Mammary epithelial cell (primary cell): ENCODE measurements at regions of chrX and their contacts with region 1.

Region 1: GRCh38 chrX:17547658-17548057 is 172.7 kb downstream of the NHS start:
- DNase-seq: peak; percentile 99
- H3K4me3 ChIP-seq: no peak overlapping the region
- H3K27ac ChIP-seq: peak overlapping the region; percentile 63
- H3K4me1 ChIP-seq: peaks cover 50% of the 10 kb centered on the region
- H3K27me3 ChIP-seq: no peaks in the 10 kb centered on the region
- CTCF ChIP-seq: no peak

Region 2: GRCh38 chrX:17405225-17405969 is 142.3 kb before region 1 on chrX:
- CTCF ChIA-PET with region 1: no interaction called
- dilution Hi-C with region 1: no loop called
- in situ Hi-C with region 1: no loop called
- intact Hi-C with region 1: loop called (anchors 2 kb)
- DNase-seq: peak; percentile 96
- H3K4me3 ChIP-seq: no peak overlapping the region
- H3K27ac ChIP-seq: peak overlapping the region; percentile 92
- H3K4me1 ChIP-seq: peaks cover 40% of the 10 kb centered on the region
- H3K27me3 ChIP-seq: no peaks in the 10 kb centered on the region
- CTCF ChIP-seq: no peak

Region 3: DNA sequence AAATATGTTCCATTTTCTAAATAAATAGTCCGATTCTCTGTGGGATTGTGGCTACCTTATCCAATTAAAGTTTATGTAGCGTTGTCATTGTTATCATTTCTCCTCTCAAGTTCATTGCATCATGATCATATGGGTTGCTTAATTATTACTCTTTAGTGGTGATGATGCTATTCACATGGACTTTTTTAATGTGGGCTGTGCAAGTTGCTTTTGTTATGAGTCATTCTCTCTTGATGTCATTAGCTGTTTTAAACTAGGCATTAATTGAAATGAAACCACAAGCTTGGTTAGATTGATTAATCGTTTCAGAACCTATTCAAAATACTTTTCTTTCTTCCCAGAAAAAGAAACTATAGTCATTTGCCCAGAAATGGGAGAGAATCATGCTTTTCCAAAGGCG is 134.4 kb before region 1 on chrX:
- CTCF ChIA-PET with region 1: no interaction called
- dilution Hi-C with region 1: no loop called
- in situ Hi-C with region 1: no loop called
- intact Hi-C with region 1: loop called (anchors 1 kb)
- DNase-seq: peak; percentile 91
- H3K4me3 ChIP-seq: no peak overlapping the region
- H3K27ac ChIP-seq: peak overlapping the region; percentile 95
- H3K4me1 ChIP-seq: peaks cover 46% of the 10 kb centered on the region
- H3K27me3 ChIP-seq: no peaks in the 10 kb centered on the region
- CTCF ChIP-seq: no peak

Region 4: GRCh38 chrX:17736856-17737706 is 189.4 kb after region 1 on chrX and contains the start of gene SCML1:
- CTCF ChIA-PET with region 1: no interaction called
- dilution Hi-C with region 1: no loop called
- in situ Hi-C with region 1: no loop called
- intact Hi-C with region 1: loop called (anchors 1 kb)
- DNase-seq: peak; percentile 92
- H3K4me3 ChIP-seq: peak within 1 kb of the TSS; percentile 63 to 71 (median 69)
- H3K27ac ChIP-seq: peak within 1 kb of the TSS; percentile 81
- H3K4me1 ChIP-seq: no peaks in the 10 kb centered on the region
- H3K27me3 ChIP-seq: no peaks in the 10 kb centered on the region
- CTCF ChIP-seq: no peak
- total RNA-seq, gene SCML1: 11.8 to 13.4 TPM